ENCODE measurements at regions of chr13 and their contacts with region 1.

Region 1: GRCh38 chr13:27712421-27712820 is 79.9 kb upstream of the GSX1 start:
- DNase-seq: no peak

Region 2: DNA sequence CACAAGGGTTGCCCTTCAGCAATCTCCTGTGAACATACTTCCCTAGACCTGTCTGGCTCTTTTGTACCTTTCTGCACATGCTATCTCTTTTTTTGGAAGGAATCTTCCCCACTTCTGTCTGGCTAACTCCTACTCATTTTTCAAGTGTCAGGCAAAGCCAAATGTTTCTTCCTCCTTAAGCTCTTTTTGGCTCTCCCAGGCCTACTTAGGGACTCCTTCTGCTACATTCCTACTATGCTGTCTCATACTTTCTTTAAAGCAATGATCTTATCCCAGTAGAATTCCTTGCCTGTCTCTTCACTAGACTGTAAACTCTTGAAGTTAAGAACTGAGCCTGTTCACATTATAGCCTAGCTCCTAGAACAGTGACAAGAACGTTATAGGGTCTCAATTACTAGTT is 1269.9 kb before region 1 on chr13:
- intact Hi-C with region 1: no loop called
- DNase-seq: no peak

Region 3: DNA sequence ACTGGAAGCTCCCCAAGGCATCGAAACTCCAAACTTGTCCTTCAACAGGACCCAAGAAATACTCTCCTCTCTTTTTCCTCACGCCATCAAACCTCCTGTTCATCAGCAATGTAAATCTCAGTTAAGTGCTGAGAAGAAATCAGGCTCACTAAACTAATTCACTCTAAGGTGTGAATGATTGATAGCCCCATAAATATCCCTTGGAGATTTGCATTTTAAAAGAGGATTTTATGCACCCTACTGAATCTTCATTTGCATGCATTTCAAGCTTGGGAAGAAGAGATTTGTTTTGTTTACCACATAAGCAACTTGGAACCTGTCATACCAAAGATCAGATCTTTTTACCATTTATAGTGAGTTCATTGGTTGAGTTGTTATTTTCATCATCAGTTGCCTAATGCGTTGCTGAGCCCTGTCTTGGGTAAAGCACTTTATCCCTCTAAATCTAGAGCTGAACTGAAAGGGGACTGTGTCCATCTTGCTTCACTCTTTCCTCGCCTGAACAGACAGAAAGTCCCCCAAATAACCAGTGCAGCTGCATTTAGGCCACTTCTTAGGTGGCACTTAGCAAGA is 39.6 kb after region 1 on chr13:
- intact Hi-C with region 1: loop called in 1 of 2 experiments (anchors 2 kb)
- DNase-seq: no peak